Cardiac septum (tissue), 1 donor: ENCODE measurements at regions of chr17 and their contacts with region 1.

Region 1: GRCh38 chr17:40086150-40087044 is 14.0 kb downstream of the NR1D1 start:
- DNase-seq: no peak

Region 2: GRCh38 chr17:40038882-40039513 is 47.4 kb before region 1 on chr17:
- intact Hi-C with region 1: loop called (anchors 10 kb)
- DNase-seq: no peak

Region 3: GRCh38 chr17:40168262-40168832 is 82.0 kb after region 1 on chr17:
- intact Hi-C with region 1: no loop called
- DNase-seq: no peak

Region 4: DNA sequence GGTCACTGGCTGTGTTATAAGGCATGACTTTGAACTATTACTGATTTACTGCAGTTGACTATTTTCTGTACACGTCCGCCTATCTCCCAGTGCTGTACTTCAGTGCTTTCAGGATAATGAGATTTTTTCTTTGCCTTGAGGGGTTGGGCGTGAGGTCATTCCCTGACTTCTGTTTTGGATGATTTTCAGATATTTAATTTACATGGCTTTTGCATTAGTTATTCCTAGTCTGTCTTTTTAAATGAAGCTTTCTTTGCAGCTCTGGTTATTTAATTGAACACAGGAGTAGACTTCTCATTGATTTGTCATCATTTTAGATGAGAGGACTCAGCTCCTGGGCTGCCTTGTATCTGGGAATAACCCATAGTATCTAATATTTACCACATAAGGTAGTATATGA is 156.4 kb after region 1 on chr17:
- intact Hi-C with region 1: no loop called
- DNase-seq: no peak